Activated naive CD4-positive, alpha-beta T cell treated with anti-CD3 and anti-CD28 coated beads, Interleukin-2, amount 10 ng/mL, durations not matched to agents 7 days and 5 days (primary cell): ENCODE measurements at regions of chr5 and their contacts with region 1.

Region 1: DNA sequence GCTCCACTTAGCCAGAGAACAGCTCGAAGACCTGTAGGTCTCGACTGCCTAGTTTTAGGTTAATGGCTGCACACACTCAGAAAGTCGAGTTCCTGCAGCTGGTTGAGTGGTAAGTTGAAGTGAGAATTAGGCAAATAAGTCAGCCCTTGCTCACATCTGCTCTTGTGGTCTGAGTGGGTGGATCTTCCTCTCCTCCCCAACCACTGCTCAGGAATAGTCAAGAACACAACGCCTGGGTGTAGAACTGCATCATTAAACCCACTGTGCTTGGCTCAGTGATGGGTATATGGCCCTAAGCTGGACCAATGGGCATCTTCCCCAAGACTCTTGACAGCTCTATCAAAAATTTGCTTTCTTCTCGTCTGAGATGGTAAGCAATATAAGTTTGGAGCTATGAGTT is 20.9 kb upstream of the ADAM19 start:
- DNase-seq: peak; percentile 50
- H3K4me3 Mint-ChIP-seq: no peak overlapping the region
- H3K27ac Mint-ChIP-seq: peak overlapping the region; percentile 76
- H3K4me1 Mint-ChIP-seq: peaks cover 97% of the 10 kb centered on the region
- H3K27me3 Mint-ChIP-seq: no peaks in the 10 kb centered on the region

Region 2: DNA sequence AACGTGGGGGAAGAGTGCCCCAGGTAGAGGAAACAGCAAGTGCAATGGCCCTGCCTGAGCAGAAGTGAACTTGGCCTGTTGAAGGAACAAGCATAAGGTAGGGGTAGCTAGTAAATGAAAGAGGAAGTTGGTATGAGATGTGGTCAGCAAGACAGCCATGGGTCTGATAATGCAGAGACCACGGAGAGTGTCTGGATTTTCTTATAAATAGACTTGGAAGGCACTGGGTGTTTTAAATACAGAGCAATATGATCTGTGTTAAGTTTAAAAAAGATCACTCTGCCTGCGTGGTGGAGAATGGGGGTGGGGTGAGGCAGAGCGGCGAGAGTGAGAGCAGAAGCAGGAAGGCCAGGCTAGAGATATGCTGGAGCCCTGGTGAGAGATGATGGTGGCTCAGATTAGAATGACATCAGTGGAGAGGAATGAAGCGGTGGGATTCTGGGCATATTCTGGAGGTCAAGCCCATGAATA is 25.1 kb before region 1 on chr5:
- CTCF ChIA-PET with region 1: interaction called, 10 read pairs
- DNase-seq: peak; percentile 58
- H3K4me3 Mint-ChIP-seq: peak overlapping the region; percentile 86
- H3K27ac Mint-ChIP-seq: peak overlapping the region; percentile 90
- H3K4me1 Mint-ChIP-seq: peaks cover 81% of the 10 kb centered on the region
- H3K27me3 Mint-ChIP-seq: peaks cover 21% of the 10 kb centered on the region